Endothelial cell of umbilical vein (primary cell): ENCODE measurements at regions of chr12 and their contacts with region 1.

Region 1: GRCh38 chr12:25958428-25959070 is at the start of gene RASSF8:
- DNase-seq: peak; percentile 74
- H3K4me3 ChIP-seq: peak within 1 kb of the TSS; percentile 95 to 100 (median 100)
- H3K27ac ChIP-seq: peak within 1 kb of the TSS; percentile 95
- H3K4me1 ChIP-seq: peaks cover 20% of the 10 kb centered on the region
- H3K27me3 ChIP-seq: no peaks in the 10 kb centered on the region
- CTCF ChIP-seq: no peak
- POLR2A ChIP-seq: peak; percentile 4
- total RNA-seq, gene RASSF8: 58.3 and 59.3 TPM in 2 replicates

Region 2: GRCh38 chr12:25436203-25437030 is 522.1 kb before region 1 on chr12:
- CTCF ChIA-PET with region 1: interaction called, 25 read pairs
- POLR2A ChIA-PET with region 1: no interaction called
- dilution Hi-C with region 1: no loop called
- intact Hi-C with region 1: loop called (anchors 1 kb)
- DNase-seq: peak; percentile 75
- H3K4me3 ChIP-seq: no peak overlapping the region
- H3K27ac ChIP-seq: no peak overlapping the region
- H3K4me1 ChIP-seq: no peaks in the 10 kb centered on the region
- H3K27me3 ChIP-seq: no peaks in the 10 kb centered on the region
- CTCF ChIP-seq: peak; percentile 66 to 69
- POLR2A ChIP-seq: no peak

Region 3: DNA sequence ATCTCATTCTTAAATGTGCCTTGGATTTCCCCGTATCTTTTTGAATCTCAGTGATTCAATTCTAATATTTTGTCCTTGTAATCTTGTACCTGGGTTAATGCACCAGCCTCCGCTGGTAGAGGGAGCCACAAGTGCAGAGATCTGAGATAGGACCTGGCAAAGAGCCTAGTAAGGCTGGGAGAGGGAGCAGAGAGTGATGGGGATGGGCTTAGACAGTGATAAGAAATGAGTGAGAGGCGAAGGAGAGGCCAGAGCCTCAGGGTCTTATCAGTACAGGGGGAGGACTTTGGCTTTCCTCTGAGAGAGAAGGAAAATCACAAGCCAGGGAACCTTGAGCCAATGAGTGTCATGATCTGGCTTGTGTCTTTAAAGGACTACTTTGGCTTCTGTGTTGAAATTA is 375.0 kb before region 1 on chr12:
- CTCF ChIA-PET with region 1: interaction called, 3 read pairs
- POLR2A ChIA-PET with region 1: no interaction called
- dilution Hi-C with region 1: no loop called
- intact Hi-C with region 1: loop called (anchors 10 kb)
- DNase-seq: peak; percentile 28
- H3K4me3 ChIP-seq: no peak overlapping the region
- H3K27ac ChIP-seq: no peak overlapping the region
- H3K4me1 ChIP-seq: no peaks in the 10 kb centered on the region
- H3K27me3 ChIP-seq: no peaks in the 10 kb centered on the region
- CTCF ChIP-seq: no peak
- POLR2A ChIP-seq: no peak

Region 4: DNA sequence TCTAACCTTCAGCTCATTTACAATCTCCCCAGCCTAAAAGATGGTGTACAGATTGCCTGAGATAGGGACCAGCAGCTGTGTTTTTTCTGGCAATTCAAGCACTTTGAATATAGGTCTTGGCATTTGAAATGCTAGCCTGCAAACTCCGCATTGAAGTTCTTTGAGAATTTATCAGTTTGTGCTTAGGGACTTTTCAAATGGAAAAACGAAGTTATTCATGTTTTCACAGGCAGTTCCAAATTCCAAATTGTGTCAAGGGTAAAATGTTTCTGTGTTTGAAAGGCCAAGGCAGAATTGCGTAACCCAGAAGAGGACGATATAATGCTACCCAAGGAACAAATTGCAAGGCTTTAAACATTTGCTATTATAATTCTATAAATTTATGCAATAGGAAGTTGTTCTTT is 169.0 kb before region 1 on chr12:
- CTCF ChIA-PET with region 1: interaction called, 6 read pairs
- POLR2A ChIA-PET with region 1: no interaction called
- dilution Hi-C with region 1: no loop called
- intact Hi-C with region 1: loop called (anchors 2 kb)
- DNase-seq: peak; percentile 83
- H3K4me3 ChIP-seq: no peak overlapping the region
- H3K27ac ChIP-seq: no peak overlapping the region
- H3K4me1 ChIP-seq: peaks cover 49% of the 10 kb centered on the region
- H3K27me3 ChIP-seq: no peaks in the 10 kb centered on the region
- CTCF ChIP-seq: no peak
- POLR2A ChIP-seq: no peak

Region 5: GRCh38 chr12:25924491-25925463 is 33.8 kb before region 1 on chr12:
- CTCF ChIA-PET with region 1: interaction called, 3 read pairs
- POLR2A ChIA-PET with region 1: no interaction called
- dilution Hi-C with region 1: no loop called
- intact Hi-C with region 1: loop called (anchors 1 kb)
- DNase-seq: peak; percentile 93
- H3K4me3 ChIP-seq: no peak overlapping the region
- H3K27ac ChIP-seq: peak overlapping the region; percentile 73
- H3K4me1 ChIP-seq: peaks cover 21% of the 10 kb centered on the region
- H3K27me3 ChIP-seq: no peaks in the 10 kb centered on the region
- CTCF ChIP-seq: peak in 1 of 2 donors; percentile 9
- POLR2A ChIP-seq: no peak

Region 6: GRCh38 chr12:25997201-25997963 is 38.8 kb after region 1 on chr12:
- CTCF ChIA-PET with region 1: interaction called, 14 read pairs
- POLR2A ChIA-PET with region 1: interaction called, 4 read pairs
- dilution Hi-C with region 1: no loop called
- intact Hi-C with region 1: loop called (anchors 1 kb)
- DNase-seq: peak; percentile 96
- H3K4me3 ChIP-seq: peak overlapping the region in 1 of 3 experiments; percentile 69
- H3K27ac ChIP-seq: peak overlapping the region; percentile 97
- H3K4me1 ChIP-seq: peaks cover 31% of the 10 kb centered on the region
- H3K27me3 ChIP-seq: no peaks in the 10 kb centered on the region
- CTCF ChIP-seq: no peak
- POLR2A ChIP-seq: no peak

Region 7: GRCh38 chr12:26028953-26029735 is 70.6 kb after region 1 on chr12:
- CTCF ChIA-PET with region 1: interaction called, 16 read pairs
- POLR2A ChIA-PET with region 1: interaction called, 3 read pairs
- dilution Hi-C with region 1: no loop called
- intact Hi-C with region 1: loop called (anchors 1 kb)
- DNase-seq: peak; percentile 78
- H3K4me3 ChIP-seq: no peak overlapping the region
- H3K27ac ChIP-seq: no peak overlapping the region
- H3K4me1 ChIP-seq: peaks cover 2% of the 10 kb centered on the region
- H3K27me3 ChIP-seq: no peaks in the 10 kb centered on the region
- CTCF ChIP-seq: peak; percentile 52 to 55
- POLR2A ChIP-seq: no peak

Region 8: GRCh38 chr12:26042645-26043044 is 84.1 kb after region 1 on chr12:
- CTCF ChIA-PET with region 1: no interaction called
- POLR2A ChIA-PET with region 1: no interaction called
- dilution Hi-C with region 1: no loop called
- intact Hi-C with region 1: no loop called
- DNase-seq: no peak
- H3K4me3 ChIP-seq: no peak overlapping the region
- H3K27ac ChIP-seq: no peak overlapping the region
- H3K4me1 ChIP-seq: peaks cover 4% of the 10 kb centered on the region
- H3K27me3 ChIP-seq: no peaks in the 10 kb centered on the region
- CTCF ChIP-seq: no peak
- POLR2A ChIP-seq: no peak

Region 9: DNA sequence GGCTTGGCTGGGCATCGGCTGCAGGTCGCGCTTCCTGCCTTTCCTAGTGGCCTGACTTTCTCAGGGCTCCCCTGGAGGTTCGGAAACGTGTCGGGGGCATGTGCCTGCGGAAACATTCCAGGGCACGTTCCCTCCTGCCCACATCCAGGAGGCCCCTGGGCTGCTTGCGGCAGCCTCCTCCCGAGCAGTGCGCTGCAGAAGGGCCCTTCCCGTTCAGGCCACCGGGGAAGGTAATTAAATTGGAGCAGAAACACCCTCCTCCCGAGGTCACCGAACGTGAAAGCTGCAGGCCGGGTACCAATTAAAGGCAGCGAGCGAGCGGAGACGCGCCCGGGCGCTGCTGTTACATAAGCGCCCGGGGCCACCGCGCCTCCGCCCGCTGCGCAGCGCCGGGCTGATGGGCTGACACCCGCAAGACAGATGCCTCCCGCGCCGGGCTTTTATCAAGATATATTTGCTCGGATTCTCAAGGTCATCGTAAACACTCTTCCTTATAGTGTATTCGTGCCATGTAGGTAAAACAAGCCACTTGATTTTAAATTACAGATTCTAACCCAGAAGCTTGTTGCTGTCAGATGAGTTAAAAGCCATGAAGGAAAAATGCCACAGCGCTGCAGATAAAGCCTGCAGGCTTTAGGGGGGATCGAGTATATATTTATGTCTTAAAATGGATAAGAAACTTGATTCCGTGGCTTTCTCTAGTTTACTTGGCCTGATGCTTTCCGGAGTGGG is 268.2 kb after region 1 on chr12:
- CTCF ChIA-PET with region 1: no interaction called
- POLR2A ChIA-PET with region 1: no interaction called
- dilution Hi-C with region 1: no loop called
- intact Hi-C with region 1: no loop called
- DNase-seq: peak; percentile 21
- H3K4me3 ChIP-seq: peak overlapping the region; percentile 30 to 56 (median 51)
- H3K27ac ChIP-seq: no peak overlapping the region
- H3K4me1 ChIP-seq: peaks cover 5% of the 10 kb centered on the region
- H3K27me3 ChIP-seq: peaks cover 0 to 7% of the 10 kb centered on the region in 2 experiments
- CTCF ChIP-seq: no peak
- POLR2A ChIP-seq: no peak